Panc1 (cell line): ENCODE measurements at regions of chr6 and their contacts with region 1.

Region 1: GRCh38 chr6:131923356-131923755 is 27.8 kb downstream of the CCN2 start:
- DNase-seq: no peak
- ATAC-seq: peak; percentile 83
- H3K4me3 ChIP-seq: no peak overlapping the region
- H3K27ac ChIP-seq: no peak overlapping the region
- H3K4me1 ChIP-seq: no peaks in the 10 kb centered on the region; the same call in 1 of the 2 replicates
- H3K27me3 ChIP-seq: no peaks in the 10 kb centered on the region
- CTCF ChIP-seq: peak; percentile 77

Region 2: GRCh38 chr6:131900231-131900630 is 23.1 kb before region 1 on chr6:
- CTCF ChIA-PET with region 1: no interaction called
- POLR2A ChIA-PET with region 1: no interaction called
- in situ Hi-C with region 1: no loop called
- intact Hi-C with region 1: no loop called
- DNase-seq: no peak
- ATAC-seq: no peak
- H3K4me3 ChIP-seq: no peak overlapping the region
- H3K27ac ChIP-seq: no peak overlapping the region
- H3K4me1 ChIP-seq: no peaks in the 10 kb centered on the region
- H3K27me3 ChIP-seq: no peaks in the 10 kb centered on the region
- CTCF ChIP-seq: no peak

Region 3: DNA sequence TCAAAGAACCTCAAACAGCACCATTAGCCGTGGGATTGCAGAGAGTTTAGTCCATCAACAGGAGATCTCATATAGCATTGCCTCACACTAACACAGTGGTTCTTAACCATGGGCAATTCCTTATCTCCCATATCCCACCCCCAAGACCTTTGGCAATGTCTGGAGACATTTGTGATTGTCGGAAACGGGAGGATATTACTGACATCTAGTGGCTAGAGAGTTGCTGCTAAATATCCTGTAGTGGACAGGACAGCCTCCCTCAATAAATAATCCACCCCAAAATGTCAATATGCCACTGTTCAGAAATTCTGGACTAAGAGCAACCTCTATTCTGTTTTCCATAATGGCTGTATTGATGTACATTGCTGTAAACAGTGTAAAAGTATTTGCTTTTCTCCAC is 237.9 kb after region 1 on chr6:
- CTCF ChIA-PET with region 1: no interaction called
- POLR2A ChIA-PET with region 1: no interaction called
- in situ Hi-C with region 1: no loop called
- intact Hi-C with region 1: loop called (anchors 2 kb)
- DNase-seq: peak; percentile 22
- ATAC-seq: peak; percentile 68; the same call in 1 of the 2 replicates
- H3K4me3 ChIP-seq: no peak overlapping the region
- H3K27ac ChIP-seq: no peak overlapping the region
- H3K4me1 ChIP-seq: no peaks in the 10 kb centered on the region
- H3K27me3 ChIP-seq: no peaks in the 10 kb centered on the region
- CTCF ChIP-seq: peak; percentile 72

Region 4: DNA sequence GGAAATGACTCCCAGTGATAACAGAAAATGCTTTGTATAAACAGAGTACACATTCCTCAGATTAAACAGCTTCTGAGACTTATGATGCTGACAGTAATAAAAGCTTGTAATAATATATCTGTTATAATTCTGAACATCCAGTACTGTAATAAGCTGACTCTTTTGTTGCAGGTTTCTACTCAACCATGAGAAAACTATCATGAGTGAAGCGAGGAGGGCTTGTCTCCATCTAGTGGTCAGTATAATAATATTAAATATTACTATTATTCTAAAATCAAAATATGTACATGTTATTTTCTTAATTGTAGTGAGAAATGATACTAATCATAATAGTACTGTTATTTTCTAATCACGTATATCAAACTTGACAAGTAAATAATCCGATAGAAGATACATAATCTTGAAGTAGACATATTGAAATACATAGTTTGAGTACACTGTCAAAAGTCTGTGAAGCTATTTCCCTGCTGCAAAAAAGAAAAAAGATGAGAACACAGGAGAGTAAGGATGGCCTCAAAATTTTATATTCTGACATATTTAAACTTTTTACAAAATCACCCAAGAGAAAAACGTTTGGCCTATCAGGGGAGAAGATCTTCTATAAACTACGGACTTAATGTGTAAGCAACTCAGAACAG is 294.8 kb after region 1 on chr6:
- CTCF ChIA-PET with region 1: interaction called, 10 read pairs
- POLR2A ChIA-PET with region 1: no interaction called
- in situ Hi-C with region 1: no loop called
- intact Hi-C with region 1: loop called (anchors 1 kb)
- DNase-seq: no peak
- ATAC-seq: no peak
- H3K4me3 ChIP-seq: no peak overlapping the region
- H3K27ac ChIP-seq: no peak overlapping the region
- H3K4me1 ChIP-seq: no peaks in the 10 kb centered on the region; the same call in 1 of the 2 replicates
- H3K27me3 ChIP-seq: no peaks in the 10 kb centered on the region
- CTCF ChIP-seq: peak; percentile 65; the same call in 1 of the 2 replicates

Region 5: DNA sequence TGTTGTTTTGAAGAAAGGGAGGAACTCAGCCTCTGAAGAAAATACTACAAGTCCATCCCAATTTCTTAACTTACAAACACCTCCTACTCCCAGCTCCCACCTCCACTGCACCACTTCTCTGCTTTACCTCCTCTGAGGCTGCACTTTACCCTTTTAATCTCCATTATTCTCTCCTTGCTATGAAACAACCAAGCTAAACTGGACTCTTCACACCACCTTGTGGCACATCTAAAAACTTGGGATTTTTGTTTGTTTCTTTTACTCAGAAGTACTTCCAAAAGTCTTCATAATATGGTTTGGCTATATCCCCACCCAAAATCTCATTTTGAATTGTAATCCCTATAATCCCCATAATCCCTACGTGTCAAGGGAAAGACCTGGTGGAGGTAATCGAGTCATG is 335.7 kb after region 1 on chr6:
- CTCF ChIA-PET with region 1: no interaction called
- POLR2A ChIA-PET with region 1: no interaction called
- in situ Hi-C with region 1: no loop called
- intact Hi-C with region 1: loop called (anchors 5 kb)
- DNase-seq: peak; percentile 7
- ATAC-seq: no peak
- H3K4me3 ChIP-seq: no peak overlapping the region
- H3K27ac ChIP-seq: no peak overlapping the region
- H3K4me1 ChIP-seq: no peaks in the 10 kb centered on the region
- H3K27me3 ChIP-seq: no peaks in the 10 kb centered on the region
- CTCF ChIP-seq: peak; percentile 35

Region 6: GRCh38 chr6:132279592-132280139 is 356.3 kb after region 1 on chr6:
- CTCF ChIA-PET with region 1: interaction called, 5 read pairs
- POLR2A ChIA-PET with region 1: no interaction called
- in situ Hi-C with region 1: no loop called
- intact Hi-C with region 1: loop called (anchors 5 kb)
- DNase-seq: peak; percentile 72
- ATAC-seq: peak; percentile 86
- H3K4me3 ChIP-seq: peak overlapping the region; percentile 29 to 58
- H3K27ac ChIP-seq: no peak overlapping the region
- H3K4me1 ChIP-seq: no peaks in the 10 kb centered on the region
- H3K27me3 ChIP-seq: no peaks in the 10 kb centered on the region
- CTCF ChIP-seq: peak; percentile 94

Region 7: GRCh38 chr6:132300323-132300949 is 377.1 kb after region 1 on chr6:
- CTCF ChIA-PET with region 1: interaction called, 3 read pairs
- POLR2A ChIA-PET with region 1: no interaction called
- in situ Hi-C with region 1: no loop called
- intact Hi-C with region 1: loop called (anchors 2 kb)
- DNase-seq: peak; percentile 20
- ATAC-seq: peak; percentile 93
- H3K4me3 ChIP-seq: no peak overlapping the region
- H3K27ac ChIP-seq: no peak overlapping the region
- H3K4me1 ChIP-seq: no peaks in the 10 kb centered on the region
- H3K27me3 ChIP-seq: no peaks in the 10 kb centered on the region
- CTCF ChIP-seq: peak; percentile 69

Region 8: DNA sequence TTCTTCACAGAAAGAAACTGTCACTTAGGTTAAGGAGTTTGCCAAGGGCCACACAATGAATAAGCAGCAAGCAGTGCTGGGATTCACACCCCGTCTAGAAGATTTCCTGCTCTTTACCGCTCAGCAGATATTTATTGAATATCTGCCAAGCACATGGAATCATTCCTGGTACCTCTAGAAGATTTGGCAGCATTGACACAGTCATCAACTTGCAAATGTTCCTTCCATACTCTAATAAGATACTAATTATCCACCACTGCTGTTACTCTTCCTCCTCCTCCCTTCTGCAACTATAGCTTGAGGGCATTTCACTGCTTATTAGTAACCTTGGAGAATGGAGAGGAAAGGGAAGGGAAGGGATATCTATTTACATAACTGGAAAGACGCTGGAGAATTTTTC is 464.9 kb after region 1 on chr6:
- CTCF ChIA-PET with region 1: interaction called, 11 read pairs
- POLR2A ChIA-PET with region 1: no interaction called
- in situ Hi-C with region 1: no loop called
- intact Hi-C with region 1: no loop called
- DNase-seq: no peak
- ATAC-seq: no peak
- H3K4me3 ChIP-seq: no peak overlapping the region
- H3K27ac ChIP-seq: no peak overlapping the region
- H3K4me1 ChIP-seq: no peaks in the 10 kb centered on the region
- H3K27me3 ChIP-seq: no peaks in the 10 kb centered on the region
- CTCF ChIP-seq: no peak